ENCODE measurements at regions of chr6 and their contacts with region 1.

Region 1: DNA sequence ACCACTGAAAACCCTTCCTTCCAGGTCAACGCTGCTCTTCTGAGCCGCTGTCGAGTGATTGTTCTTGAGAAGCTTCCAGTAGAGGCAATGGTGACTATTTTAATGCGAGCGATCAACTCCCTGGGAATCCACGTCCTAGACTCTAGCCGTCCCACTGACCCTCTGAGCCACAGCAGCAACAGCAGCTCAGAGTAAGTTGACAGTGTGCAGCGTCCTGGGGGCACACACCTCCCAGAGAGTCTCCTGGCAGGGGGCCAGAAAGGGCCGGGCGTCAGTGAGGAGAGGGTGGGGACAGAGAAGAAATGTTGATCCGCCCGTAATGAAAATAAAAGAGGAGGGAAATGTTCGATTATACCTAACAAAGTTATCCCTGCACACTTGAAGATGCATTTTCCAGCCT is 5.0 kb downstream of the WRNIP1 start:
- DNase-seq: peak in 1 of 10 donors; percentile 87

Region 2: GRCh38 chr6:2931970-2932748 is 162.0 kb after region 1 on chr6:
- intact Hi-C with region 1: loop called (anchors 10 kb)
- DNase-seq: peak; percentile 58 to 96 (median 85)